Activated CD4-positive, alpha-beta T cell treated with anti-CD3 and anti-CD28 coated beads for 36 hours (primary cell): ENCODE measurements at regions of chr2 and their contacts with region 1.

Region 1: GRCh38 chr2:177263451-177264208 is 897 bp downstream of the NFE2L2 start:
- DNase-seq: peak; percentile 96
- ATAC-seq: peak; percentile 69
- H3K4me3 Mint-ChIP-seq: peak overlapping the region; percentile 91
- H3K27ac Mint-ChIP-seq: peak overlapping the region; percentile 98
- H3K4me1 Mint-ChIP-seq: peaks cover 53% of the 10 kb centered on the region
- H3K27me3 Mint-ChIP-seq: no peaks in the 10 kb centered on the region

Region 2: DNA sequence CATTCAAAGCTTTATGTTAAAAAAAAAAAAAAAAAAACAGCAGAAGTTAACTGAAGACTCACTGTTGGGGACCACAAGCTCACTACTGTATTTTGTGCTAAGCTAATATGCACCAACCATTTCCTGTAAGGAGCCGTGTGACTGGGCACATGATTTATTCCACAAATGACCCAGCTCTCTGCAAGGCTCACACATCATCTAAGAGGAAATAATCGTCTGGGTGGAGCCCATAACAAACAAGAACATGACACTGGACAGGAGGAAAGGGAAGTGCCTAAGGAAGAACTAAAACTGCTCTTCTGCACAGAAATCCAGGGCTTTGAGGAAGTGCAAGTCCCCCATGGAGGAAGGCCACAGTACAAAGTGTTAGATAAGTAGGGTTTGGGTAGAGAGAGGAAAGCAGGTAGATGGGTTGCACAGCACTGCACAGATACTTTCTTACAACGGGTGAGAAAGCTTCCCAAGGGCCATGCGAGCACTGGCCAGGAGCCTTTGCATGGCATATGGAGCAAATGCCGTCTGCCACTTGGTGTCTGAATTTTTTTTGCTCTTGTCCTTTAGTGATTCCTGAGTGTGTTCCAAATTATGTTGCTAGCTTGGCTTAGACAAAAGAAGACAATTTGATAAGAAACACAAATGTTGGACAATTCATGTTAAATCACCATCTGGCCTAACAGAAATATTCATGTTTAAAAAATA is 23.5 kb before region 1 on chr2:
- CTCF ChIA-PET with region 1: interaction called, 22 read pairs
- POLR2A ChIA-PET with region 1: interaction called, 8 read pairs
- intact Hi-C with region 1: loop called (anchors 1 to 2 kb)
- DNase-seq: peak; percentile 57
- ATAC-seq: peak; percentile 86
- H3K4me3 Mint-ChIP-seq: peak overlapping the region; percentile 4
- H3K27ac Mint-ChIP-seq: peak overlapping the region; percentile 94
- H3K4me1 Mint-ChIP-seq: peaks cover 80% of the 10 kb centered on the region
- H3K27me3 Mint-ChIP-seq: no peaks in the 10 kb centered on the region

Region 3: DNA sequence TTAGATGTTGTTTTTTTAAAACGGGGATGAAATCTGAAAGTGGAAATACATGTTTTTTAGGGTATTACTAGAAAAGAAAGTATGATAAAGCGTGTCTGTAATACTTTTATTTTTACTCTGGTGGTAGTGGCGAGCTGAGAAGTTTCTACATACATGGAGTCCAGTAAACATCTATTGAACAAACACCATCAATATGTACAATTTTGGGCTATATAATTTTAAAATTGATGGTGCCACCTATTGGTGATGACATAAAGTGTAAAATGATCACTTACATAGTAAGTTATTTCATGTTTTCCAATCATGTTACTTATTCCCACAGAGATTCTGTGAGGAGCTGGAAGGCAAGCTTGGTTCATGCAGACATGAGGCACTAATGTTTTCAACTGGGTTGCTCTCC is 32.4 kb after region 1 on chr2:
- CTCF ChIA-PET with region 1: interaction called, 23 read pairs
- POLR2A ChIA-PET with region 1: interaction called, 3 read pairs
- intact Hi-C with region 1: loop called (anchors 1 kb)
- DNase-seq: no peak
- ATAC-seq: peak; percentile 24
- H3K4me3 Mint-ChIP-seq: no peak overlapping the region
- H3K27ac Mint-ChIP-seq: no peak overlapping the region
- H3K4me1 Mint-ChIP-seq: peaks cover 23% of the 10 kb centered on the region
- H3K27me3 Mint-ChIP-seq: no peaks in the 10 kb centered on the region

Region 4: GRCh38 chr2:177419274-177419673 is 155.6 kb after region 1 on chr2:
- CTCF ChIA-PET with region 1: interaction called, 6 read pairs
- POLR2A ChIA-PET with region 1: interaction called, 8 read pairs
- intact Hi-C with region 1: loop called in 1 of 2 experiments (anchors 2 kb)
- DNase-seq: no peak
- ATAC-seq: no peak
- H3K4me3 Mint-ChIP-seq: no peak overlapping the region
- H3K27ac Mint-ChIP-seq: peak overlapping the region; percentile 80
- H3K4me1 Mint-ChIP-seq: peaks cover 34% of the 10 kb centered on the region
- H3K27me3 Mint-ChIP-seq: no peaks in the 10 kb centered on the region

Region 5: DNA sequence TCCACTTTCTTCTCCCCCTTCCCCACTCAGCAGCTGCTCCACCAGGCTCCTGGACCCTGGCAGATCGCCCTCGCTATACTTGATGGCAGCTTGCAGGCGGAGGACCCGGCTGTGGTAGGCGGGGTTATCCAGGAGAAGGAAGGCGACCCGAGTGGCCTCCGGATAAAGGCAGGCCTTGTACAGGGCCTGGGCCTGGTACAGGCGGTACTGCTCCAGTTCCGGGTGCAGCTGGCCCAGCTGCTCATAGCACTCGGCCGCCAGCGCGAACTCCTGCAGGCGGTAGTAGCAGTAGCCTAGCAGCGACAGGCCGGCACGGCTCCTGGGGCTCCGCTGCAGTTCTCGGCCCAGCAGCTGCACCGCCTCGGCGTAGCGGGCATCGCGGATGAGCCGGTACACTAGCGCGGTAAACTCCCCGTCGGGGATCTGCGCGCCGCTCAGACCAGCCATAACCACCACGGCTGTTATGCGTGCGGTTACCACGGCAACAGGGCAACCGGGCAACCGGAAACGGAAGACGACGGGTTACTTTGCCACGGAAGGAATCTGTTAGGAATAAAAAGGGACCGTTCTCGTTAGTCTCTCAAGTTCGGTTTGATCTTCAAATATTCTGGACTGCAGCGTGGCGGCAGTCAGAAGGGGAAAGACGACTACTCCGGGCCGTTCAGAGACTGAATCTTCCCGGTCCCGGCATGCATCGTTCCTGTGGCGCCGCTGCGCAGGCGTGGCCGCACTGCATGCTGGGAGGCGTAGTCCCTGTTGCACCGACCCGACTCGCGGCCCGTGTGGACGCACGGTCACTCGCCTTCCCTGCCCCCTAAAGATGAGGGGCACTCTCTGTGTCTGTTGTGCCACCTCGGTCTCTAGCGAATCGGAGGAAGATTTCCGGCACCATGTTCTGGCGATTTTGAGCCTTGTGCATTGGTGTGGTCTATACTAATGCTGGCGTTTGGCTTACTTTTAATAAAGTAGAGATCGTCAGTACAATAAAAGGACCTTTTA is 354.9 kb after region 1 on chr2:
- CTCF ChIA-PET with region 1: no interaction called
- POLR2A ChIA-PET with region 1: no interaction called
- intact Hi-C with region 1: loop called in 1 of 2 experiments (anchors 1 kb)
- DNase-seq: peak; percentile 95
- ATAC-seq: peak; percentile 95
- H3K4me3 Mint-ChIP-seq: peak overlapping the region; percentile 90
- H3K27ac Mint-ChIP-seq: peak overlapping the region; percentile 98
- H3K4me1 Mint-ChIP-seq: no peaks in the 10 kb centered on the region
- H3K27me3 Mint-ChIP-seq: no peaks in the 10 kb centered on the region